Dorsolateral prefrontal cortex (tissue), 120 donors: ENCODE measurements at regions of chr10 and their contacts with region 1.

Region 1: DNA sequence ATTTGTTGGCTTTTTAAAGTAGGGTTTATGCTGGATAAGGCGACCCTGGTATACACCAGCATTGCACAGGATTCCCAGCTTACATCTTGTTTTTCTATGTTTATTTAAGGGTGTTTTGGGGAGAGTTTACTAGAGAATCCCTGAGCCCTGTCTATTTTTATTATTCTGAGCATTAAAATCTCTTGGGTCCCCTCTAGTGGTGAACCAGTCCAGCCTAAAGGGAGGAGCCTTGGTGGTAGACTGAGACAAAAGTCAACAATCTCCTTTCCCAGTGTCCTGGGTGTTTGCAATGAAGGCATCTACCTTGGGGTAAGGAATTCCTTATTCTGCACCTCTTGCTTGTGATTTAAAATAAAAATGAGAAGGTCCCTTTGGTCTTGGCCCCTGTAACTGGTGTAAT is 38.2 kb downstream of the ANTXRL start:
- DNase-seq: no peak
- H3K4me3 ChIP-seq: no peak overlapping the region
- H3K27ac ChIP-seq: peak overlapping the region in 33 of 59 donors; percentile 3 to 100 (median 43)
- H3K27me3 ChIP-seq: no peaks in the 10 kb centered on the region
- CTCF ChIP-seq: peak in 53 of 56 donors; percentile 17 to 80 (median 55)

Region 2: DNA sequence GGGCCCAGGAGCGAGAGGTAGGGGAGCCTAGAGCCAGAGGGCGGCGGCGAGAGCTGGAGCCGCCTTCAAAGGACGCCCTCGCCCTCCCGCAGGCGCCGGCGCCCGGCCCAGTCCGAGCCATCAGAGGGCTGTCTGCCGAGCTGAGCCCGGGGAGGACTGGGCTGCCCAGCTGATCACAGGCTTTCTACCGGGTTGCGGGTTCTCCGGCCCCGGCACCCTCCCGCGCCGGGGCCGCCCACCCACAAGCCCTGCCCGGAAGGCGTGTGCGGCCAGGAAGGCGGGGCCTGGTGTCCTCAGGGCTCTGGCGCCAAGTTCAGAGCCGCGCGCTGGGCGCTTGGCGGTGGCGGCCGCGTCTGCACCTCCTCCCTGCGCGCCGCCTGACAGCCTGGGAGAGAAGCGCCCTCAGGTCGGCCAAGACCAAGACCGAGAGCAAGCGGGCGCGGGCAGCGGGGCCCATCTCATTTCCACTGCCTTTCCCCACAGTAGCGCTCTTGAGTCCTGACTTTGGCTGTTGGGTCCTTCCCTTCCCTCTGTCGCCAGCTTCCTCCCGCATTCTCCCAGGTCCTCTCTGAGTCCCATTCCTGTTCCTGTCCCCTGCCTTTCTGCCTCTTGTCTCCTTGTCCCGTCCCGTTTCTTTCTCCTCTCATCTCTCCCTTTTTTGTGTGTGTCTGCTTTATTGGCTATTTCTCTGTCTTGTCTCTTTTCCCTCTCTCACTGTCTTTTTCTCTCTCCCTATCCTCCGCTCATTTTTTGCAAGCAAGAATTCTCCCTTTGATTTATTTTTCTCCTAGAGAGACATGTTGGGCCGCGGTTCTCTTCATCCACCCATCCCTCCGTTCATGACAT is 218.4 kb before region 1 on chr10:
- intact Hi-C with region 1: loop called in 1 of 2 experiments (anchors 2 kb)
- DNase-seq: peak; percentile 27 to 81 (median 53)
- H3K4me3 ChIP-seq: peak overlapping the region; percentile 41 to 74 (median 60)
- H3K27ac ChIP-seq: peak overlapping the region in 7 of 59 donors; percentile 11 to 78 (median 25)
- H3K27me3 ChIP-seq: no peaks in the 10 kb centered on the region
- CTCF ChIP-seq: peak in 22 of 56 donors; percentile 10 to 52 (median 28)

Region 3: GRCh38 chr10:46228563-46229071 is 96.4 kb before region 1 on chr10:
- intact Hi-C with region 1: loop called in 1 of 2 experiments (anchors 5 kb)
- DNase-seq: peak; percentile 38 to 85 (median 78)
- H3K4me3 ChIP-seq: no peak overlapping the region
- H3K27ac ChIP-seq: peak overlapping the region in 1 of 59 donors; percentile 18
- H3K27me3 ChIP-seq: no peaks in the 10 kb centered on the region
- CTCF ChIP-seq: peak; percentile 52 to 99 (median 86)

Region 4: GRCh38 chr10:46255801-46256747 is 68.9 kb before region 1 on chr10:
- intact Hi-C with region 1: no loop called
- DNase-seq: peak in 7 of 10 donors; percentile 17 to 67 (median 56)
- H3K4me3 ChIP-seq: peak overlapping the region in 3 of 59 donors; percentile 0 to 5 (median 4)
- H3K27ac ChIP-seq: peak overlapping the region in 2 of 59 donors; percentile 2 to 5
- H3K27me3 ChIP-seq: no peaks in the 10 kb centered on the region
- CTCF ChIP-seq: peak in 53 of 56 donors; percentile 28 to 77 (median 53)

Region 5: DNA sequence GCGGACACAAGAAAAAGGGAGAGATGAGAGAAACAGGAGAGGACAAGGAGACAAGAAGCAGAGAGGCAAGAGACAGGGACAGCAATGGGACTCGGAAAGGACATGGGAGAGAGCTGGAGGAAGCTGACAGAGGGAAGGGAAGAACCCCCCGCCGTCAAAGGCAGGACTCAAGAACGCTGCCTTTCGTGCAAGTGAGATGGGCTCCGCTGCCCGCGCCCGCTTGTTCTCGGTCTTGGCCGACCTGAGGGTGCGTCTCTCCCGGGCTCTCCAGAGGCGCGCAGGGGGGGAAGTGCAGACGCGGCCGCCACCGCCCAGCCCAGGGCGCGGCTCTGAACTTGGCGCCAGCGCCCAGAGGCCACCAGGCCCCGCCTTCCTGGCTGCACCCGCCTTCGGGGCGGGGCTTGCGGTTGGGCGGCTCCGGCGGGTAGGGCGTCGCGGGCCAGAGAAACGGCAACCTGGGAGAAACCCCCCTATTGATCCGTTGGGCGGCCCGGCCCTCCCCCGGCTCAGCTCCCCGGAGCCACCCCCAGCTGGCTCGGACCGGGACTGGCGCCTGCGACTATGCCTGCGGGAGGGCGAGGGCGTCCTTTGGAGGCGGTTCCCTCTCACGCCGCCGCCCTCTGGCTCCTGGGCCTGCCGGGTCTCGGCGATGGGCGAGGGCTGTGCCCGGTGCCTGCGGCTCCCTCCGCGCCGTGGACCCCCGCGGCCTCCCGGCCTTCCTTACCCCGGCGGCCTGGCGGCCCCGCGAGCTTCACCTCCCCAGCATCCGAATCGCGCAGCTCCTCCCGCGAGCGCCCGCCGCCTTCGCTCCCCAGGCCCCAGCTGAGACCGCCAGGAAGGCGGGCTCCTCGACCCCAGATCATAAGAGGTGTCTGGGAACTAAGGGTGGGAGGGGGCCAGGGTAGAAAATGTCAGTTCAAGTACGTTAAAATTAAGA is 40.5 kb before region 1 on chr10:
- intact Hi-C with region 1: loop called (anchors 5 to 10 kb)
- DNase-seq: peak; percentile 50 to 93 (median 74)
- H3K4me3 ChIP-seq: peak overlapping the region; percentile 41 to 93 (median 75)
- H3K27ac ChIP-seq: peak overlapping the region; percentile 18 to 95 (median 84)
- H3K27me3 ChIP-seq: no peaks in the 10 kb centered on the region
- CTCF ChIP-seq: peak in 28 of 56 donors; percentile 6 to 60 (median 31)